GM18951 (cell line): ENCODE measurements at regions of chr6 and their contacts with region 1.

Region 1: DNA sequence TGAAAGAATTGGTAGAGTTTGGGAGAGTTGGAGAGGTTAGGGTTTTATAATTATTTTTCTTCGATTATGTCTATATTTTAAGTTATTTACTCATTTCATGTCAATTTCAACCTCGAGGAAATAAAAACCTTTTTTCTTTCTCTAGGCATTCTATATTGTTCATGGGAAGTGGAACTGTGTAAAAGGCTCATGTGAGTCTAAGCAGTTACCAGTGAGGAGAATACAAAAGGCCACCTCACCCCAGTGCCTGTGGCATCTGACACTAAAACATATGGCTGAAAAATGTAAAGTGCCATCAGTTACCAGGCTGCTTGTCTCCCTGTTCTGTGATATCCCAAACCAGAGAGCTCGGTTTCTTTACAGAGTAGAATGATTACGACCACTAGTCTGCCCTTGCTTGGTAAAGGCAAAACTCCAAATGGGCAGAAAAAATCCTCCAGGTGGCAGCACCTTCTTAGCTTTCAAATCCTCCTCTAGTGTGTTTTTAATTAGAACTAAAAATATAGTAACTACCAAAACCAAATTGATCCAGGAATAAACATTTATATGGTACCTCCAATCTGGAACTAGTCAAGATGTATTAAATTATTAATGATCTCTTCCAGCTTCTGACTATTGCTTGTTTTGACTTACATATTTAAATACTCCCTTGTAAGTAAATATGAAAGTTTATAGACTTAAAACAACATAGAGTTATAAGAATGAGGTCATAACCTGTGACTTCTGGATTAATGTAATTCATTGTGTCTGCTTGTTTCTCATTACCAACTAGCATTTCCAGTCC is 122.6 kb upstream of the MCHR2 start:
- POLR2A ChIP-seq: no peak

Region 2: GRCh38 chr6:100023798-100024197 is 92.8 kb before region 1 on chr6:
- in situ Hi-C with region 1: no loop called
- POLR2A ChIP-seq: no peak

Region 3: GRCh38 chr6:100479179-100480035 is 362.8 kb after region 1 on chr6:
- in situ Hi-C with region 1: loop called (anchors 5 kb)
- POLR2A ChIP-seq: no peak

Region 4: DNA sequence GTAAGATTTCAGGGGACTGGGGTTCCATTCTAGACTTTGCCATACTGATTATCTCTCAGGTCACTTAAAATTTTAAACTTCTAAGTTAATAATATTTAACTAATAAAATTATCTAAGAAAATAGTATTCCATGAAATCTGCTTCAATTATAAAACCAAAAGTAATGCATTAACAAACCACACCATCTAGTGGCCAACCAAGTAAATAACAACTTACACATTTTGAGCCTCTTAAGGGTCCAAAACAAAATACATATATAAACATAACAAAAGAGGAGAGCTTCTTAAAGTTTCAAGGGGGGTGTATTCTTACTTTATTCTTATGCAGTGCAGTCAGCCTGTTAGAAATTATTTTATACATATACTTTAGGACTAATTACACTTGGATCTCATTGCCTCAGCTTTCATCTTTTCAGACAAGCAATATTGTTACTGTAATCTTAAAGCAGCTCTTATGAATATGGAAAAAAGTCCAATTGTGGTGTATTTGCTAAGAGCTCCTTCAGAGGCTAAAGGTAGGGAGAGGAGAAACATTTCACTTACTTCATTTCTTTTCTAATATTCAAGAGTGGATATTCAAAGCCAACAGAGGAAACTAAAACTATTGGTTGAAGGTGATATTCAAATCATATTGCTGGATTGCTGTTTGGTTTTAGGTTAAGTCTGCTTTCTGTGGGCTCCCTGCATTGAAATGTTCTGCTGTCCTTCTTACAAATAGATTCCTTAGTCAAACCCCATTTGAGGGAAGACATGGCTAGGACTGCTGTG is 547.9 kb after region 1 on chr6:
- in situ Hi-C with region 1: loop called (anchors 25 kb)
- POLR2A ChIP-seq: no peak